ENCODE measurements at regions of chr2 and their contacts with region 1.

Region 1: DNA sequence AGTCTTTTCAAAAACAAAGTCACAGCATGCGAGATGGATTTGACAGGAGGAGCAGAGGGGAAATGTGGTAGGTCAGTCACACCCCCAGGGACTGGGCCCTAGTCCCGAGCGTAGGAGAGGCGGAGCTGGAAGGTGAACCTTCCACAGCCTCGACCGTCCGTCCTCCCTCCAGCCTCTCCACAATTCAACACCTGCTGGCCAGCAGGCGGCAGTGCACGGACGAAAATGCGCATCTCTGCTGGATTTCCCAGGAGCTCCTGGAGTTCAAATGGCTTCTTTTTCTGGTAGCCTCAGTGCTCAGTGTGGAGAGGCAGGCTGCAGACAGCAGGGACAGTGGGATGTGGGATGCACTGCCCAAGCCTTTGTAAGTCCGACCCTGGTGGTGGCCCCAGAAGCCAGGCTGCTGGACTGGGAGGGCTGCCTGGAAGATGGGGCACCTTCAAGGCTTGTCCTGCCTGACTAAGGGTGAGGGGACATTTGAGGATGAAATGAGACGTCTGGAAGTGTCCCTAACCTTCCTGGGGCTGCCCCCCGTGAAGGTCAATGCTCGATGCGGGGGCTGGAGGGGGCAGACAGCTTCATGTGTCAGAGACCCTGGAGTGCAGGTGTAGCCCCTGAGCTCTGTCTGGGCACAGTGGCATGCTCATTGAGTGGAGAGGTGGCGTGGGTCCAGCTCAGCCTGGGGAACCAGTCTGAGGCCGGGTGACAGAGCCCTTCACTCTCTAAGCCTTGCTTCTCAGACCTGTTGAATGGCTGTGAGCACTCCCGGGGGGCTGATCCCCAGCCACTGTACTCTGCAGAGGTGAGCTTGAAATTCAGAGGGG is 189.5 kb downstream of the TFCP2L1 start:
- DNase-seq: peak; percentile 76 to 82 (median 80)
- ATAC-seq: peak; percentile 86
- H3K4me3 ChIP-seq: no peak overlapping the region
- H3K27ac ChIP-seq: no peak overlapping the region
- H3K4me1 ChIP-seq: no peaks in the 10 kb centered on the region
- H3K27me3 ChIP-seq: peaks cover 0 to 8% of the 10 kb centered on the region in 2 donors
- CTCF ChIP-seq: peak; percentile 48 to 87 (median 78)
- POLR2A ChIP-seq: no peak

Region 2: GRCh38 chr2:120919771-120920453 is 175.6 kb before region 1 on chr2:
- intact Hi-C with region 1: no loop called
- DNase-seq: no peak
- ATAC-seq: peak; percentile 13
- H3K4me3 ChIP-seq: no peak overlapping the region
- H3K27ac ChIP-seq: no peak overlapping the region
- H3K4me1 ChIP-seq: peaks cover 10% of the 10 kb centered on the region
- H3K27me3 ChIP-seq: no peaks in the 10 kb centered on the region
- CTCF ChIP-seq: no peak
- POLR2A ChIP-seq: no peak

Region 3: DNA sequence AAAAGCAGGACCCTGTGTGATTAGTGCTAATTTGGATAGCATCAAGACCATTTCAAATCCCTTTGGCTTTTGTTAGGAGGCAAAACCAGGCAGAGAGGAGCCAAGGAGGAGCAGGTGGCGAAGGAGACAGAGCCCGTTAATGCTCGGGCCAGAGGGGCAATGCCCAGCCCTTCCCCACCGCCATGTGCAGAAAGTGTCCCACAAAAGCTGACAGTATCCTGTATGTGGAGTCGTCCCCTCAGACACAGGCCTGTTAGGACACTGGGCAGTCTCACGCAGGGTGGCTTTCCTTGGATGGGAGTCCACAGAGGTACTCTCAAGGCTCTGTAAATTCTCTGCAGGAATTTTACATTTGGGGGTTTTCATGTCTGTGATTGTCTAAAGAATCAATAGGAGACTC is 234.3 kb after region 1 on chr2:
- intact Hi-C with region 1: loop called (anchors 10 kb)
- DNase-seq: no peak
- ATAC-seq: no peak
- H3K4me3 ChIP-seq: no peak overlapping the region
- H3K27ac ChIP-seq: no peak overlapping the region
- H3K4me1 ChIP-seq: peaks cover 9% of the 10 kb centered on the region
- H3K27me3 ChIP-seq: no peaks in the 10 kb centered on the region
- CTCF ChIP-seq: no peak
- POLR2A ChIP-seq: no peak

Region 4: GRCh38 chr2:121356058-121356640 is 260.7 kb after region 1 on chr2:
- intact Hi-C with region 1: loop called (anchors 10 kb)
- DNase-seq: peak; percentile 53 to 71 (median 60)
- ATAC-seq: peak; percentile 69
- H3K4me3 ChIP-seq: no peak overlapping the region
- H3K27ac ChIP-seq: no peak overlapping the region
- H3K4me1 ChIP-seq: peaks cover 11% of the 10 kb centered on the region
- H3K27me3 ChIP-seq: no peaks in the 10 kb centered on the region
- CTCF ChIP-seq: peak; percentile 24 to 79 (median 60)
- POLR2A ChIP-seq: no peak

Measured in body of pancreas (tissue), 4 donors.